Tibial artery (tissue), 4 donors: ENCODE measurements at regions of chr15 and their contacts with region 1.

Region 1: DNA sequence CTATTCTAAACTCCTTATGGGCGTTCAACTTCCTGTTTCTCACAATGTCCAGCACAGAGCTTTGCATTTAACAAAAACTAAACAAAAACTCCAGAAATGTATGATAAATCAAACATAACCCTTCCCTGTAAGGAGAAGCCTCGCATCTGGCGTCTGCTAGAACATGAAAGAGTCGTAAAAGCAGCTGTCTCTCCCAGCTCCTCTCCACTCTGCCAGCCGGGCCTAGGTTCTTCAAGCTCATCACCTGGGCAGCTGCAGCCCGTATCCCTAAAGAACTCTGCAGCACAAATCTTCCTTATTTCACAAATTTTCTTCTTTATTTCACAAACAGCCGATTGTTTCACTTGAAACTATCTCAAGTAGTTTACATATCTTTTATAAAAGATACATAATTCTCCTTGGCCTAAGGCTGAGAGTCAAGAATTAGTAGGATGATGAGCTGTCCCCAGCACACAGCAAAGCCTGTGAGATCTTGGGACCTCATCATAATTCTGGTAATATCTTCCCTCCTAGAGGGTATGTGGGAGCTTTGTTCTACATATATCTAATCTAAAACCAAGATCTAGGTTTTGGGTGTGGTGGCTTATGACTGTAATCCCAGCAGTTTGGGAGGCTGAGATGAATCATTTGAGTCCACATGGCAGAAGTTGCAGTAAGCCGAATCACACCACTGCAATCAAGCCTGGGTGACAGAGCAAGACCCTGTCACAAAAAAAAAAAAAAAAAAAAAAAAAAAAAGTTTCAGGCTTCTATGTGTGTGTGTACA is 35.3 kb downstream of the ANXA2 start:
- DNase-seq: no peak
- H3K4me3 ChIP-seq: no peak overlapping the region
- H3K27ac ChIP-seq: peak overlapping the region; percentile 54 to 60
- H3K4me1 ChIP-seq: peaks cover 0 to 64% (median 41%) of the 10 kb centered on the region in 4 donors
- H3K27me3 ChIP-seq: no peaks in the 10 kb centered on the region
- CTCF ChIP-seq: no peak

Region 2: DNA sequence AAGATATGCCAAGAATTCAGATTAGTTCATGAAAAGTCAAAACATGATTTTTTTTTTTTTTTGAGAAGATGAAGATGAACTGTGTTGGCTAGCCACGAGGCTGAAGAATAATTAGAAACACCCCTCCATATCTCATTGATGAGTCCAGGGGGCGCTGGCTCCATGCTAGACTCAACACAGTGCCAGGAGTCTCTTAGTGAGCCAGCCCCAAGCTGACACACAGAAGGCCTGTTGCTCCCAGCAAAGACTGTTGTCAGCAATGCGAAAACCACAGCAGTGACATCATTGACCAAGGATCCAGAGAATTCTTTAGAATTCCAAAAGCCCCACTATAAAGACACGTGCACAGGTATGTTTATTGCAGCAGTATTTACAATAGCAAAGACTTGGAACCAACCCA is 150.0 kb before region 1 on chr15:
- intact Hi-C with region 1: no loop called
- DNase-seq: no peak
- H3K4me3 ChIP-seq: no peak overlapping the region
- H3K27ac ChIP-seq: no peak overlapping the region
- H3K4me1 ChIP-seq: no peaks in the 10 kb centered on the region
- H3K27me3 ChIP-seq: no peaks in the 10 kb centered on the region
- CTCF ChIP-seq: no peak

Region 3: DNA sequence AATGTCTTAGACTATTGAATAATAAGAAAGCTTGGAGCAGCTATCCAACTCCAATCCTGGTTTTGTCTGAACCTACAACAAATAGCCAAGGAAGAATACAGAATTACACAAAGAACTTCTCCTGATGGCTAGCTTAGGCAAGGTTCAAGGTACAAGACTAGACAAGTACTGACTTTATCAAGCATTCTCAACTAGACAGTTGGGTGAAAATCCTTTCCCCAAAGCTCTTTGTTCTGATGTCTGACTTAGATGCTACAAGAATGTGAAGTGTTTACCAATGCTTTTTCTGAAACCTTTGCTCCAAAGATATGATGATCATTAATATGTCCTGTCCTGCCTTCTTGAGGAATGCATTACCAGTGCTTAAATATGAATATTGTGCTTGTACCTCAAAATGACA is 78.6 kb before region 1 on chr15:
- intact Hi-C with region 1: no loop called
- DNase-seq: no peak
- H3K4me3 ChIP-seq: no peak overlapping the region
- H3K27ac ChIP-seq: no peak overlapping the region
- H3K4me1 ChIP-seq: no peaks in the 10 kb centered on the region
- H3K27me3 ChIP-seq: peaks cover 0 to 2% of the 10 kb centered on the region in 2 donors
- CTCF ChIP-seq: no peak

Region 4: DNA sequence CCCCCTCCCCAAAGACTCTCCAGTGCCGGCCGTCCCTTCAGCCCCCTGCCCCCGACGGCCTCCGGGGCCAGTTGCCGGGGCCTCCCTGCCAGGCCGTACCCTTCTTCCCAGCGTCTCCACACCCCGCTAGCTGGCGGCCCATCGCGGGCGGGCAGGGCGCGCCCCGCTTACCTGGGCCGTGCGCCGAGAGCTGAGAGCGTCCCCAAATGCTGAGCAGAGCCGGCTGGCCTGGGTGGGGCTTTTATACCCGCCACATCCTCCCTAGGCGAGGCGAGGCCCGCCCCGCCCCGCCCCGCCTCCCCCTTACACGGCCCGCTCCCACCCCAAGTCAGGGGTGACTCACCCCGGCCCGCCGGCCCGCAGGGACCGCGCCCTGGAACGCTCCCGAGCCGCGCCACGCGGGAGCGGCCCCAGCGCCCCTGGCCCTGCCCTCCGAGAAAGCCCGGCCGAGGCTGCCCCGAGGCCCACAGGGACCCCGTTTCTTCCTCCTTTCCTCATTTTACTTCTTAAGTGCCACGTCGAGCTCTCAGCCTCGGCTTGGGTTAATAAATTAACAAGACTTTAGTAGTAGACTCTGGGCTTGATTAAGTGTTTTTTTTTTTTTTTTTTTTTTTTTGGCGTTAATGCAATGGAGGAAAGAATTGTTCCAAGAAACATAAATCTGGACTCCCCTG is 35.4 kb after region 1 on chr15 and contains the start of gene ANXA2:
- intact Hi-C with region 1: loop called (anchors 5 kb)
- DNase-seq: peak; percentile 85 to 94
- H3K4me3 ChIP-seq: peak within 1 kb of the TSS; percentile 96 to 97
- H3K27ac ChIP-seq: peak within 1 kb of the TSS; percentile 96 to 99
- H3K4me1 ChIP-seq: peaks cover 6 to 73% (median 50%) of the 10 kb centered on the region in 4 donors
- H3K27me3 ChIP-seq: no peaks in the 10 kb centered on the region
- CTCF ChIP-seq: no peak

Region 5: GRCh38 chr15:60444289-60444912 is 81.9 kb after region 1 on chr15:
- intact Hi-C with region 1: loop called (anchors 5 kb)
- DNase-seq: no peak
- H3K4me3 ChIP-seq: no peak overlapping the region
- H3K27ac ChIP-seq: no peak overlapping the region
- H3K4me1 ChIP-seq: no peaks in the 10 kb centered on the region
- H3K27me3 ChIP-seq: no peaks in the 10 kb centered on the region
- CTCF ChIP-seq: peak; percentile 55 to 73

Region 6: DNA sequence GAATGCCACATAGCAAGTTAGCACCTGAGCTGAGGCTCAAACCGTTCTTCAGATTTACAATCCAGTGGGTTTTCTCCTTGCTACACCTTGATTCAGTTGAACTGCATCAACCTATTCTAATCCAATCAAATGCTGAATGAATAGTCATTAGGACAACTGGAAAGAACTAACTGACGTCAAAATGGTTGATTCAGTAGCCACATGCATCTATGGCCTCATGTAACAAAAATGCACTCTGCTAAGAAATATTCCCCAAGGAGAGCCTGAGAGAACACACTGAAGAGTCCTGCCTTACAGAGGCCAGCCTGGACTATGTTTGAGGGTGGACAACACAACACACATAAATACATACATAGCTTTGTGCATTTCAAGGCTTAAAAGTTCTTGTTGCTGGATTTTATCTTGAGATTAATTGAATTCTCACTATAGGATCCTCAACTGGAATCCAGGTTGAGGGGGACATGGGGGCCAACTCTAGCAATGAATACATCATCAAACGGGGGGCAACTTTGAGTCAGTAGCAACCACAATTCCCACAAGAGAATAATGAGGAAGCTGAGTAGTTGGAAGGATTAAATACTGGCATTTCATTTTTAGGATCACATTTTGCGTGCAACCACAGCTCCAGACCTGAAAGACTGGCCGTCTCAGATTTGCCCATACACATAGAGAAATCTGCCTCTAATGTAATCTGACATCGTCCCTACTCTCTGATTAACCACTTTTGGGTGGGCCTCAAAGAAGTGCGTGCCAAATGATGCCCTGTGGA is 396.6 kb after region 1 on chr15:
- intact Hi-C with region 1: no loop called
- DNase-seq: no peak
- H3K4me3 ChIP-seq: no peak overlapping the region
- H3K27ac ChIP-seq: peak overlapping the region; percentile 17 to 39
- H3K4me1 ChIP-seq: peaks cover 0 to 17% (median 10%) of the 10 kb centered on the region in 4 donors
- H3K27me3 ChIP-seq: no peaks in the 10 kb centered on the region
- CTCF ChIP-seq: no peak